ENCODE measurements at regions of chr3 and their contacts with region 1.

Region 1: DNA sequence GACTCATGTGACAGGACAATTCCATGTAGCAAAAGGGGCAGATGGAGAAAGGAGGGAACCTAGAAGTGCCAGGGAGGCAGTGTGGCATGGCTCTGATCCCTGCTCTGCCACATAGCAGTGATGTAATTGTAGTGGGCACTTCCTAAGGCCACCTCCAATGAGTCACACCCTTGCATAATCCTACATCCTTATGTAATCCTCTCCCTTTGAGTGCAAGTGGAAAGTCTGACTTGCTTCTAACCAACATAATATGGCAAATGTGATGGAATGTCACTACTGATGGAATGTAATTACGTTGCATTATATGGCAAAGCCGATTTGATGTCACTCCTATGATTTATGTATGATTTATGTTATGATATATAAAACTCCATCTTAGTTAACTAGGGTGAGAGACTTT is 72.9 kb upstream of the ATP2C1 start:
- DNase-seq: no peak
- ATAC-seq: no peak

Region 2: DNA sequence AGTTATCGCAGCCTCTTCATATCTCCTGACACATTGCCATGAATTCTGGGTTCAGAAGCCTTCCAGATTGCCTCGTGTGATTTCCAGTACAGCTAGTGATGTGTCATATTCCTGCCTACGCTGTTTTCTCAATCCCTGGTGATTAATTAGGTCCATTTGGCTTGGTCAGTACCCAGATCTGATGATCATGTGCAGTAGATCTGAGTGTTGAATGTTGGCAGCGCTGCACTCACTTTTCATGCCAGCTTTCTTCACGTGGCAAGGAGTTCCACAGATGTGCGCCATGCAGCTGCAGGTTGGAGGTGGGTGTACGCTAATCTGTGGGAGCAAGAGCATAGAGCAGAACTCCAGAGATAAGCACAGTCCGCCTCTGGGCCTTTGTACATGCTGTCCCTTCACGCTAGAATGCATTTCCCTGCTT is 562.4 kb before region 1 on chr3:
- intact Hi-C with region 1: no loop called
- DNase-seq: peak; percentile 69
- ATAC-seq: peak; percentile 64

Region 3: DNA sequence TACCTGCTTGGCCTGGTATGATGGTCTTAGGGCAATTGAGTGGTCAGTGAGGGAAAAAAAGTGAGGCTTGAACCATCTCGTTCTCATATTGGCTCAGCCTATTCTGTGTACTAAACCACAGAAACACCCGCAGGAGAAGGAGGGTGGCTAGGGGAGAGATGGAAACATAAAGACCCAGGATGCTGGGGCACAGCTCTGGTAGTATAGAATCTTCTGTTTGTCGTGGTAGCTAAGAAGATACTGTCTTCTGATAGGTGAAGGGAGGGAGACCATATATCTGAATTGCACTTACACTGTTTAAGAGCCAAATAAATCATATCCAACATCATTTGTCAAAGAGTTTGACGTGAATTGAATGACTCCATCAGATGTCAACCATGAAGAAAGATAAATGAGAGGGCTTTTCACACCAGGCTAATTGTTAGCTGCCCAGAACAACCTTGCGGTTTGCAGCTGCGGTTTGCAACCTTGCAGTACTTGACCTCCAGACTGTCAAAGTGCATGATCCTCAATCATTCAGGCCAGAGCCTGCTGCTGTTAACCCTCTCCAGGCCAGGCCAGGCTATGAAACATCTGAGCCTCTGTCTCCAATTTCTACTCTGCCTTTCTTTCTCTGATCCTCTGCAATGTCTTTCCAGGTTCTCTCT is 33.4 kb before region 1 on chr3:
- intact Hi-C with region 1: loop called (anchors 5 kb)
- DNase-seq: no peak
- ATAC-seq: no peak

Measured in Right ventricle myocardium inferior (tissue), 1 donor.